ENCODE measurements at regions of chr11 and their contacts with region 1.

Region 1: DNA sequence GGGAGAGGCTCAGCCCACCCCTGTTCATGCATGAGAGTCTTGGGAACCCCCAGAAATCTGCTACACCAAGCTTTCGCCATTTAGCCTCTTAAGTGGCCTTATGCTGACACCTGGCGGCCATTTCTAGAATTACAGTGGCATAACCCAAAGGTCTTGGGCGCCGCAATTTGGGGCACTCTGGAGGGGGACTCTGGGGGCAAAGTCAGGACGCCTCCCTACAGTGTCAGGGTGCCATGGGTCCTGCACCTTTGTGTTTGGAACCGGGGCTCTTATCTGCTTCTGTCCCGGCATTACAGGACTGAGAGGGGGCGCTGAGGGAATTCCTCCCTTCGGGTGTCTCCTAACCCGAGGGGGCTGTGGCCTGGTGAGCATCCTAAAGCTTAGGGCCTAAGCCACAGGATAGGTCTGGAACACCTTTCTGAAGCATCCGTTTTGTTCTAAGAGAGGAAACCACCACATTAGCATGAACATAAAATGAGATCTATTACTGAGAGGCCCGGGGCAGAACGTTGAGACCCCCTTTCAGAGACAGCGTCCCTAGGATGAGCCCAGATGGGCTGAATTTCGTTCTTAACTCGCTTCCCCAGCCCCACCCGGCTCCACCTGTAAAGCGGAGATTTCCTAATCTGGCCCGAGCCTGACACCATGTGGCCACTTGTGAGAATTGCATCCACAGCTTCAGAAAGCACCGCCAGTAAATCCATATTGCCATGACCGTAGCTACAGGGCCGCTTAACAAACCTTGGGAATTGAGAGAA is 9.3 kb downstream of the INS start:
- DNase-seq: peak; percentile 57 to 67 (median 65)
- H3K4me3 ChIP-seq: peak overlapping the region in 1 of 3 experiments; percentile 31
- H3K4me3 Mint-ChIP-seq: no peak overlapping the region
- H3K27ac ChIP-seq: no peak overlapping the region
- H3K27ac Mint-ChIP-seq: peak overlapping the region in 5 of 7 donors; percentile 19 to 50 (median 25)
- H3K4me1 ChIP-seq: peaks cover 5 to 7% of the 10 kb centered on the region in 2 donors
- H3K4me1 Mint-ChIP-seq: peaks cover 12% of the 10 kb centered on the region
- H3K27me3 ChIP-seq: peaks cover 0 to 43% of the 10 kb centered on the region in 2 donors
- H3K27me3 Mint-ChIP-seq: peaks cover 35 to 68% (median 43%) of the 10 kb centered on the region in 3 donors
- CTCF ChIP-seq: peak; percentile 95

Region 2: GRCh38 chr11:1694064-1694845 is 457.4 kb before region 1 on chr11:
- intact Hi-C with region 1: loop called (anchors 1 kb)
- DNase-seq: peak; percentile 79 to 84 (median 81)
- H3K4me3 ChIP-seq: peak overlapping the region in 1 of 3 experiments; percentile 57
- H3K4me3 Mint-ChIP-seq: peak overlapping the region in 1 of 2 donors; percentile 78
- H3K27ac ChIP-seq: no peak overlapping the region
- H3K27ac Mint-ChIP-seq: no peak overlapping the region
- H3K4me1 ChIP-seq: peaks cover 10 to 14% of the 10 kb centered on the region in 2 donors
- H3K4me1 Mint-ChIP-seq: peaks cover 5% of the 10 kb centered on the region
- H3K27me3 ChIP-seq: peaks cover 0 to 43% of the 10 kb centered on the region in 2 donors
- H3K27me3 Mint-ChIP-seq: peaks cover 37 to 67% (median 44%) of the 10 kb centered on the region in 3 donors
- CTCF ChIP-seq: peak; percentile 67

Region 3: GRCh38 chr11:1837171-1838076 is 314.3 kb before region 1 on chr11:
- intact Hi-C with region 1: loop called (anchors 5 kb)
- DNase-seq: peak; percentile 62 to 67 (median 64)
- H3K4me3 ChIP-seq: no peak overlapping the region
- H3K4me3 Mint-ChIP-seq: no peak overlapping the region
- H3K27ac ChIP-seq: no peak overlapping the region
- H3K27ac Mint-ChIP-seq: peak overlapping the region in 2 of 7 donors; percentile 30 to 60
- H3K4me1 ChIP-seq: peaks cover 56 to 60% of the 10 kb centered on the region in 2 donors
- H3K4me1 Mint-ChIP-seq: peaks cover 33% of the 10 kb centered on the region
- H3K27me3 ChIP-seq: peaks cover 0 to 10% of the 10 kb centered on the region in 2 donors
- H3K27me3 Mint-ChIP-seq: peaks cover 11 to 29% (median 12%) of the 10 kb centered on the region in 3 donors
- CTCF ChIP-seq: peak; percentile 99

Region 4: DNA sequence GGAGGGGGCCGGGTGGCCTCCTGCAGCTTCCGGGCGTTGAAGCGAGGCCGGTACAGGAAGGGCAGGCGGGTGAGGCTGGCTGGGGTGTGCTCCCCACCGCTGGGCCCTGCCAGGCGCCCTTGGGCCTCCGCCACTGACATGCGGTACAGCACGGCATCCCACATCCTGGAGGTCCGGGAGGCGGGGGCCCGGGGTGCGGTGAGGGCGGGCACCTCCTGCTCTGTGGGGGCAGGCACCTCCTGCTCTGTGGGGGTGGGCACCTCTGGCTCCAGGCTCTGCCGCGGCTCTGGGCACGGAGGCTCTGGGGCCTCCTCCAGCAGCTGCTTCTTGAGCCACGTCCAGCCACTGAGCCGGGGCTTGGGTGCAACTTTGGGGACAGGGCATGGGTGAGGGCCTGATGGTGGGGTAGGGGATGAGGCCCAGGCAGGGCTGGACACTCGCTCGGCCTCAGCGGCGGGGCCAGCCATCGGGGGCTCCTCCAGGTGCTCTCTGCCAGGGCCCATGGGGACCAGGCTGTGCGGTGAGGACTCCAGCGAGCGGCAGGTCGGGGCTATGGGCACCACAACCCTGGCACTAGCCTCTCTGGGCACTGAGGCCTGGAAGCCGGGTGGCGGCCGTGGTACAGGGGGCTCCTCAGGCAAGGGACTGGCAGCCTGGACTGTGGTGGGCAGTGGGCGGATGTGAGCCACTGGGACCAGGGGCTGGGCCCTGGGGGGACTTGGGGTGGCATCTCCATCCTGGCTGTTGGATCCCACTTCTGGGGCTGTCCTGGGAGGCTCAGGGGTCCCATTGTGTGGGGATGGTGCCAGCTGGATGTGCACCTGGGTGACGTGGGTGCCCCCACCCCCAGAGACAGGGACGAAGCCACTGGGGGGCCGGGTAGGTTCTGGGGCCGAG is 262.2 kb before region 1 on chr11:
- intact Hi-C with region 1: loop called (anchors 5 to 10 kb)
- DNase-seq: no peak
- H3K4me3 ChIP-seq: peak overlapping the region in 1 of 3 experiments; percentile 20
- H3K4me3 Mint-ChIP-seq: peak overlapping the region in 1 of 2 donors; percentile 82
- H3K27ac ChIP-seq: no peak overlapping the region
- H3K27ac Mint-ChIP-seq: no peak overlapping the region
- H3K4me1 ChIP-seq: peaks cover 36 to 44% of the 10 kb centered on the region in 2 donors
- H3K4me1 Mint-ChIP-seq: peaks cover 19% of the 10 kb centered on the region
- H3K27me3 ChIP-seq: peaks cover 0 to 26% of the 10 kb centered on the region in 2 donors
- H3K27me3 Mint-ChIP-seq: peaks cover 18 to 52% (median 24%) of the 10 kb centered on the region in 3 donors
- CTCF ChIP-seq: no peak